Pancreas (tissue), 10 donors: ENCODE measurements at regions of chrX and their contacts with region 1.

Region 1: GRCh38 chrX:38166478-38167083 is 54.1 kb downstream of the SRPX start:
- DNase-seq: peak in 1 of 6 donors; percentile 12
- ATAC-seq: peak in 1 of 4 donors; percentile 47
- H3K4me3 ChIP-seq: no peak overlapping the region
- H3K27ac ChIP-seq: no peak overlapping the region
- H3K4me1 ChIP-seq: no peaks in the 10 kb centered on the region
- H3K27me3 ChIP-seq: no peaks in the 10 kb centered on the region
- CTCF ChIP-seq: peak; percentile 33 to 71 (median 62)

Region 2: DNA sequence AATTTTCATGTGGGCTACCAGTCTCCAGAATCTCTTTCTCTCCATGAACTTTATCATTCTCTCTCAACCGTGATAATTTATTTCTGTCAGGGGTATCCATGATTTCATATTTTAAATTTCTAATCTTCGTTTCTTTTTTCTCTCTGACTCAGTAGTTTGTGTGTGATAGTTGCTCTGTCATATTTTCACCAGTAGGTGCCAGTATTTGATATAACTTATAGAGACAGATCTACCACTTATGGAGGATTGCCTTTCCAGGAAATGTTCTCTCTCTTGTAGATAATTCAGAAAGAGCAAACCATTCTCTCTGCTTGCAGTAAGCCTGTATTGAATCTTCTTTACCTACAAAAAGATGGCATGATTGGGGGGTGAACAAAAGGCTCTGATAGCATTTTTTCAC is 239.9 kb before region 1 on chrX:
- intact Hi-C with region 1: loop called in 1 of 3 experiments (anchors 5 kb)
- DNase-seq: no peak
- ATAC-seq: peak; percentile 50 to 84 (median 80)
- H3K4me3 ChIP-seq: no peak overlapping the region
- H3K27ac ChIP-seq: no peak overlapping the region
- H3K4me1 ChIP-seq: no peaks in the 10 kb centered on the region
- H3K27me3 ChIP-seq: peaks cover 0 to 21% (median 2%) of the 10 kb centered on the region in 4 donors
- CTCF ChIP-seq: peak; percentile 14 to 47 (median 24)

Region 3: GRCh38 chrX:38205039-38205438 is 38.5 kb after region 1 on chrX:
- intact Hi-C with region 1: no loop called
- DNase-seq: no peak
- ATAC-seq: no peak
- H3K4me3 ChIP-seq: no peak overlapping the region
- H3K27ac ChIP-seq: no peak overlapping the region
- H3K4me1 ChIP-seq: no peaks in the 10 kb centered on the region
- H3K27me3 ChIP-seq: peaks cover 0 to 6% (median 1%) of the 10 kb centered on the region in 4 donors
- CTCF ChIP-seq: no peak